ENCODE measurements at regions of chr16 and their contacts with region 1.

Region 1: GRCh38 chr16:13919683-13920509 is at the start of gene ERCC4:
- DNase-seq: peak; percentile 100
- H3K4me3 ChIP-seq: peak within 1 kb of the TSS; percentile 92
- H3K27ac ChIP-seq: peak within 1 kb of the TSS; percentile 38
- H3K4me1 ChIP-seq: peaks cover 23% of the 10 kb centered on the region
- CTCF ChIP-seq: peak; percentile 91
- total RNA-seq, gene ERCC4: 7.3 TPM in 2 replicates

Region 2: GRCh38 chr16:13997933-13998332 is 78.0 kb after region 1 on chr16:
- CTCF ChIA-PET with region 1: no interaction called
- POLR2A ChIA-PET with region 1: interaction called, 4 read pairs
- intact Hi-C with region 1: loop called (anchors 5 kb)
- DNase-seq: peak; percentile 92
- H3K4me3 ChIP-seq: peak overlapping the region; percentile 13
- H3K27ac ChIP-seq: peak overlapping the region; percentile 70
- H3K4me1 ChIP-seq: peaks cover 39% of the 10 kb centered on the region
- CTCF ChIP-seq: no peak

Region 3: GRCh38 chr16:14202697-14203096 is 282.8 kb after region 1 on chr16:
- CTCF ChIA-PET with region 1: no interaction called
- POLR2A ChIA-PET with region 1: no interaction called
- intact Hi-C with region 1: loop called (anchors 10 kb)
- DNase-seq: no peak
- H3K4me3 ChIP-seq: no peak overlapping the region
- H3K27ac ChIP-seq: no peak overlapping the region
- H3K4me1 ChIP-seq: no peaks in the 10 kb centered on the region
- CTCF ChIP-seq: peak; percentile 60

Region 4: GRCh38 chr16:14249291-14250032 is 329.6 kb after region 1 on chr16:
- CTCF ChIA-PET with region 1: no interaction called
- POLR2A ChIA-PET with region 1: no interaction called
- intact Hi-C with region 1: loop called (anchors 10 kb)
- DNase-seq: peak; percentile 62
- H3K4me3 ChIP-seq: no peak overlapping the region
- H3K27ac ChIP-seq: no peak overlapping the region
- H3K4me1 ChIP-seq: no peaks in the 10 kb centered on the region
- CTCF ChIP-seq: peak; percentile 100

Region 5: GRCh38 chr16:14285513-14286385 is 365.9 kb after region 1 on chr16:
- CTCF ChIA-PET with region 1: interaction called, 5 read pairs
- POLR2A ChIA-PET with region 1: interaction called, 7 read pairs
- intact Hi-C with region 1: loop called (anchors 5 kb)
- DNase-seq: peak; percentile 91
- H3K4me3 ChIP-seq: peak overlapping the region; percentile 76
- H3K27ac ChIP-seq: peak overlapping the region; percentile 67
- H3K4me1 ChIP-seq: peaks cover 51% of the 10 kb centered on the region
- CTCF ChIP-seq: no peak

Region 6: GRCh38 chr16:14529010-14529669 is 609.2 kb after region 1 on chr16:
- CTCF ChIA-PET with region 1: no interaction called
- POLR2A ChIA-PET with region 1: no interaction called
- intact Hi-C with region 1: loop called (anchors 5 kb)
- DNase-seq: peak; percentile 78
- H3K4me3 ChIP-seq: no peak overlapping the region
- H3K27ac ChIP-seq: no peak overlapping the region
- H3K4me1 ChIP-seq: peaks cover 22% of the 10 kb centered on the region
- CTCF ChIP-seq: peak; percentile 93